ENCODE measurements at regions of chr12 and their contacts with region 1.

Region 1: GRCh38 chr12:19239616-19240234 is 110.2 kb downstream of the PLEKHA5 start:
- DNase-seq: peak; percentile 63
- H3K4me3 ChIP-seq: no peak overlapping the region
- CTCF ChIP-seq: no peak

Region 2: GRCh38 chr12:19201661-19202060 is 38.1 kb before region 1 on chr12:
- in situ Hi-C with region 1: no loop called
- DNase-seq: no peak
- H3K4me3 ChIP-seq: no peak overlapping the region
- CTCF ChIP-seq: no peak

Region 3: DNA sequence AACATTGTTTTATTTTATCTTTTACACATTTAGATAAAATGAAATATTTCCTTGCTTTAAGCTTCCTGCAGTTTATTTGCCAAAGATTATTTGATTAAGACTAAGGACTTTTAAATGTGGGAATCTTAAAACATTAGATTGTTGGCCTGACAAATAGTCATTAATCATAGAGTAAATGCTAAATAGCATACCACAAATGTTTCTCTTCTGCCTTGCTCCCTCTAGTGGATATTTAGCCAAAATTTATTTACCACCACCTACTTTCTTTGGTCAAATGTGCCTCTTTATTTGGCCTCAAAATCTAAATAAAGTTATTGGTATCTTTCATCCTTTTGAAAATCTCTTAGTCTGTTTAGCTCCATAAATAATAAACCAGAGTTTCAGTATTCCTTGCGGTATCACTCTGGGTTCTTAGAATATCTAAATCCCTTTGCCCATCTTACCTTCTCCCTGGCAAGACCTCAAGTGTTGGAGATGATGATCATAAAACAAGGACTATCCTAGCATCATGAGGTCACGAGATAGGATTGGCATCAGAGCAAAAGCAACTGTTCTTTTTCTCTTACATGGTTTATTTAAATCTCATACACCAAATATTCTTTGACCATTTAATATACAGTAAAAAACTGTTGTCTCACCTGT is 49.0 kb after region 1 on chr12:
- in situ Hi-C with region 1: loop called (anchors 5 kb)
- DNase-seq: peak; percentile 33
- H3K4me3 ChIP-seq: no peak overlapping the region
- CTCF ChIP-seq: peak; percentile 38

Measured in astrocyte of the cerebellum (primary cell).